GM10248 (cell line): ENCODE measurements at regions of chr7 and their contacts with region 1.

Region 1: GRCh38 chr7:131071786-131072504 is 255.7 kb upstream of the MKLN1 start:
- DNase-seq: no peak
- CTCF ChIP-seq: peak; percentile 35

Region 2: GRCh38 chr7:131057015-131057793 is 14.7 kb before region 1 on chr7:
- CTCF ChIA-PET with region 1: interaction called, 39 read pairs
- POLR2A ChIA-PET with region 1: no interaction called
- DNase-seq: peak; percentile 31
- CTCF ChIP-seq: no peak